ENCODE measurements at regions of chr18 and their contacts with region 1.

Region 1: GRCh38 chr18:77061946-77062517 is 70.6 kb downstream of the MBP start:
- DNase-seq: peak in 1 of 5 donors; percentile 62
- H3K4me3 ChIP-seq: peak overlapping the region in 1 of 2 donors; percentile 8
- H3K4me3 Mint-ChIP-seq: peak overlapping the region; percentile 61 to 92 (median 81)
- H3K27ac ChIP-seq: peak overlapping the region; percentile 77
- H3K27ac Mint-ChIP-seq: peak overlapping the region; percentile 97 to 100 (median 99)
- H3K4me1 ChIP-seq: peaks cover 95% of the 10 kb centered on the region
- H3K4me1 Mint-ChIP-seq: peaks cover 72 to 89% (median 82%) of the 10 kb centered on the region in 4 donors
- H3K27me3 ChIP-seq: no peaks in the 10 kb centered on the region
- H3K27me3 Mint-ChIP-seq: no peaks in the 10 kb centered on the region

Region 2: GRCh38 chr18:77073336-77074093 is 11.5 kb after region 1 on chr18:
- CTCF ChIA-PET with region 1: interaction called, 60 read pairs
- POLR2A ChIA-PET with region 1: interaction called, 160 read pairs
- intact Hi-C with region 1: loop called (anchors 1 kb)
- DNase-seq: peak in 4 of 5 donors; percentile 28 to 53 (median 34)
- H3K4me3 ChIP-seq: no peak overlapping the region
- H3K4me3 Mint-ChIP-seq: peak overlapping the region in 7 of 8 donors; percentile 4 to 65 (median 48)
- H3K27ac ChIP-seq: peak overlapping the region; percentile 51
- H3K27ac Mint-ChIP-seq: peak overlapping the region; percentile 79 to 99 (median 92)
- H3K4me1 ChIP-seq: peaks cover 90% of the 10 kb centered on the region
- H3K4me1 Mint-ChIP-seq: peaks cover 76 to 99% (median 90%) of the 10 kb centered on the region in 4 donors
- H3K27me3 ChIP-seq: no peaks in the 10 kb centered on the region
- H3K27me3 Mint-ChIP-seq: no peaks in the 10 kb centered on the region

Region 3: GRCh38 chr18:77124452-77124922 is 62.5 kb after region 1 on chr18:
- CTCF ChIA-PET with region 1: interaction called, 28 read pairs
- POLR2A ChIA-PET with region 1: interaction called, 178 read pairs
- intact Hi-C with region 1: no loop called
- DNase-seq: peak in 4 of 5 donors; percentile 38 to 79 (median 46)
- H3K4me3 ChIP-seq: peak overlapping the region in 1 of 2 donors; percentile 34
- H3K4me3 Mint-ChIP-seq: peak overlapping the region; percentile 71 to 88 (median 80)
- H3K27ac ChIP-seq: peak overlapping the region; percentile 66
- H3K27ac Mint-ChIP-seq: peak overlapping the region; percentile 86 to 96 (median 89)
- H3K4me1 ChIP-seq: peaks cover 99% of the 10 kb centered on the region
- H3K4me1 Mint-ChIP-seq: peaks cover 75 to 100% (median 91%) of the 10 kb centered on the region in 4 donors
- H3K27me3 ChIP-seq: no peaks in the 10 kb centered on the region
- H3K27me3 Mint-ChIP-seq: no peaks in the 10 kb centered on the region

Region 4: GRCh38 chr18:77140439-77141109 is 78.5 kb after region 1 on chr18:
- CTCF ChIA-PET with region 1: interaction called, 16 read pairs
- POLR2A ChIA-PET with region 1: interaction called, 71 read pairs
- intact Hi-C with region 1: no loop called
- DNase-seq: peak; percentile 58 to 73 (median 60)
- H3K4me3 ChIP-seq: no peak overlapping the region
- H3K4me3 Mint-ChIP-seq: peak overlapping the region in 7 of 8 donors; percentile 24 to 63 (median 36)
- H3K27ac ChIP-seq: no peak overlapping the region
- H3K27ac Mint-ChIP-seq: peak overlapping the region; percentile 74 to 94 (median 87)
- H3K4me1 ChIP-seq: peaks cover 30% of the 10 kb centered on the region
- H3K4me1 Mint-ChIP-seq: peaks cover 33 to 69% (median 43%) of the 10 kb centered on the region in 4 donors
- H3K27me3 ChIP-seq: no peaks in the 10 kb centered on the region
- H3K27me3 Mint-ChIP-seq: no peaks in the 10 kb centered on the region

Region 5: GRCh38 chr18:77433076-77433475 is 371.0 kb after region 1 on chr18:
- CTCF ChIA-PET with region 1: no interaction called
- POLR2A ChIA-PET with region 1: no interaction called
- intact Hi-C with region 1: no loop called
- DNase-seq: no peak
- H3K4me3 ChIP-seq: no peak overlapping the region
- H3K4me3 Mint-ChIP-seq: no peak overlapping the region
- H3K27ac ChIP-seq: no peak overlapping the region
- H3K27ac Mint-ChIP-seq: no peak overlapping the region
- H3K4me1 ChIP-seq: no peaks in the 10 kb centered on the region
- H3K4me1 Mint-ChIP-seq: no peaks in the 10 kb centered on the region
- H3K27me3 ChIP-seq: no peaks in the 10 kb centered on the region
- H3K27me3 Mint-ChIP-seq: peaks cover 11 to 27% of the 10 kb centered on the region in 2 donors

Measured in CD4-positive, alpha-beta memory T cell (primary cell).